ENCODE measurements at regions of chr13 and their contacts with region 1.

Region 1: GRCh38 chr13:79212064-79212619 is 193.9 kb downstream of the RBM26 start:
- DNase-seq: no peak
- CTCF ChIP-seq: no peak

Region 2: GRCh38 chr13:79194272-79194671 is 17.9 kb before region 1 on chr13:
- CTCF ChIA-PET with region 1: interaction called, 10 read pairs
- POLR2A ChIA-PET with region 1: no interaction called
- DNase-seq: peak; percentile 55
- CTCF ChIP-seq: no peak

Region 3: DNA sequence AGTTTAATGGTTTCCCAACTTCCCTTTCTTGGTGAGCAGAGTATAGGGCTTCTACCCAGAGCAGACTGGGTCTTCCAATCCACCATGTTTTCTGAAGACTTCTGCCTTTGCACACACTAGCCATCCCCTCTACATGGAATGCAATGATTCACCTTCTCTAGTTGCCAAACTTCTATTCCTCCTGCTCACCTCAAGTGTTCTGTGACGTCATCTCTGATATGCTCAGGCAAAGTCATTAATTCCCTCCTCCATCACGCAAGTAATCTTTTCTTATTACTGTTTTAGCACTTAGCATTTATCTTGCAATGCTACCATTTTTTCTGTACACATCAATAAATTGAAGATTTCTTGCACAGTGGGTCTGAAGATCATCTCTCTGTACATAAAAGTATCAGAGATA is 19.7 kb after region 1 on chr13:
- CTCF ChIA-PET with region 1: no interaction called
- POLR2A ChIA-PET with region 1: no interaction called
- DNase-seq: no peak
- CTCF ChIP-seq: no peak